ENCODE measurements at regions of chr15 and their contacts with region 1.

Region 1: GRCh38 chr15:84981054-84981710 is 474 bp upstream of the PDE8A start:
- DNase-seq: peak; percentile 94 to 98 (median 97)
- ATAC-seq: peak; percentile 85
- H3K4me3 ChIP-seq: peak overlapping the region; percentile 98
- H3K4me3 Mint-ChIP-seq: peak overlapping the region; percentile 88 to 97 (median 95)
- H3K27ac ChIP-seq: peak overlapping the region; percentile 89
- H3K27ac Mint-ChIP-seq: peak overlapping the region; percentile 85 to 98 (median 94)
- H3K4me1 ChIP-seq: peaks cover 8 to 13% of the 10 kb centered on the region in 2 donors
- H3K4me1 Mint-ChIP-seq: peaks cover 26 to 53% (median 44%) of the 10 kb centered on the region in 7 donors
- H3K27me3 ChIP-seq: no peaks in the 10 kb centered on the region
- H3K27me3 Mint-ChIP-seq: peaks cover 0 to 26% (median 0%) of the 10 kb centered on the region in 5 donors

Region 2: GRCh38 chr15:84588053-84588874 is 392.9 kb before region 1 on chr15:
- CTCF ChIA-PET with region 1: no interaction called
- POLR2A ChIA-PET with region 1: no interaction called
- intact Hi-C with region 1: loop called in 1 of 2 experiments (anchors 5 kb)
- DNase-seq: peak; percentile 68 to 84 (median 79)
- ATAC-seq: peak; percentile 100
- H3K4me3 ChIP-seq: no peak overlapping the region
- H3K4me3 Mint-ChIP-seq: peak overlapping the region in 8 of 10 donors; percentile 30 to 75 (median 63)
- H3K27ac ChIP-seq: no peak overlapping the region
- H3K27ac Mint-ChIP-seq: no peak overlapping the region
- H3K4me1 ChIP-seq: no peaks in the 10 kb centered on the region
- H3K4me1 Mint-ChIP-seq: peaks cover 0 to 6% (median 5%) of the 10 kb centered on the region in 7 donors
- H3K27me3 ChIP-seq: no peaks in the 10 kb centered on the region
- H3K27me3 Mint-ChIP-seq: peaks cover 0 to 34% (median 9%) of the 10 kb centered on the region in 5 donors

Region 3: GRCh38 chr15:84633311-84634227 is 347.6 kb before region 1 on chr15:
- CTCF ChIA-PET with region 1: no interaction called
- POLR2A ChIA-PET with region 1: interaction called, 11 read pairs
- intact Hi-C with region 1: loop called (anchors 1 to 2 kb)
- DNase-seq: peak; percentile 48 to 77 (median 66)
- ATAC-seq: peak; percentile 67
- H3K4me3 ChIP-seq: peak overlapping the region; percentile 96
- H3K4me3 Mint-ChIP-seq: peak overlapping the region; percentile 84 to 99 (median 98)
- H3K27ac ChIP-seq: peak overlapping the region; percentile 78
- H3K27ac Mint-ChIP-seq: peak overlapping the region; percentile 79 to 98 (median 93)
- H3K4me1 ChIP-seq: peaks cover 26 to 40% of the 10 kb centered on the region in 2 donors
- H3K4me1 Mint-ChIP-seq: peaks cover 23 to 58% (median 53%) of the 10 kb centered on the region in 7 donors
- H3K27me3 ChIP-seq: no peaks in the 10 kb centered on the region
- H3K27me3 Mint-ChIP-seq: no peaks in the 10 kb centered on the region

Region 4: DNA sequence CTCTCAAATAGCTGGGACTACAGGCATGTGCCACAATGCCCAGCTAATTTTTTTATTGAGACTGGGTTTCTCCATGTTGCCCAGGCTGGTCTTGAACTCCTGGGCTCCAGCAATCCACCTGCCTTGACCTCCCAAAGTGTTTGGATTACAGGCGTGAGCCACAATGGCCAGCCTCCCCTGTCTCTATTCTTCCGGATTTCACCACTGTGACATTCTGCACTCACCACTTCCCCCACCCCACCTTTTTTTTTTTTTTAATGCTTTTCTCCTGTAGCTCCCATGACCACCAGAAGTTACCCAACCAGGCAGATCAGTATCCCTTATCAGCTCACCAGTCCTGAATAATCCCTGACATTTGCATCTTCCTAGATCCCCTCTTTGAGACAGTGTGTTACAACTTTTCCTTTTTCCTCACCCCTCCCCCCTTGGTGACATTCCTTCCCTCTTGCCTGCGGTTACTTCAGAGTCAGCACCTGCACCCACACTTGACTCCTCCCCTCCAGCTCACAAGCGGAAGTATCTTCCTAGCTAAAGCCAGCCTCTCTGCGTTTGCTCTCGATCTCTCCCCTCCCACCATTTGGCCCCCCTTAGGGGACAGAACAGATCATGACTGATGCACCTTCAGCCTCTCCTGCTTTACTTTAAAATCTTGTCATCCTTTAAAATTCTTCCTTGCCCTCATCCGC is 246.2 kb before region 1 on chr15:
- CTCF ChIA-PET with region 1: no interaction called
- POLR2A ChIA-PET with region 1: no interaction called
- intact Hi-C with region 1: loop called in 1 of 2 experiments (anchors 1 kb)
- DNase-seq: peak in 8 of 9 donors; percentile 69 to 83 (median 78)
- ATAC-seq: peak; percentile 85
- H3K4me3 ChIP-seq: peak overlapping the region; percentile 56
- H3K4me3 Mint-ChIP-seq: peak overlapping the region; percentile 71 to 89 (median 84)
- H3K27ac ChIP-seq: peak overlapping the region; percentile 67
- H3K27ac Mint-ChIP-seq: peak overlapping the region; percentile 89 to 96 (median 93)
- H3K4me1 ChIP-seq: peaks cover 34 to 47% of the 10 kb centered on the region in 2 donors
- H3K4me1 Mint-ChIP-seq: peaks cover 36 to 62% (median 50%) of the 10 kb centered on the region in 7 donors
- H3K27me3 ChIP-seq: no peaks in the 10 kb centered on the region
- H3K27me3 Mint-ChIP-seq: no peaks in the 10 kb centered on the region

Region 5: DNA sequence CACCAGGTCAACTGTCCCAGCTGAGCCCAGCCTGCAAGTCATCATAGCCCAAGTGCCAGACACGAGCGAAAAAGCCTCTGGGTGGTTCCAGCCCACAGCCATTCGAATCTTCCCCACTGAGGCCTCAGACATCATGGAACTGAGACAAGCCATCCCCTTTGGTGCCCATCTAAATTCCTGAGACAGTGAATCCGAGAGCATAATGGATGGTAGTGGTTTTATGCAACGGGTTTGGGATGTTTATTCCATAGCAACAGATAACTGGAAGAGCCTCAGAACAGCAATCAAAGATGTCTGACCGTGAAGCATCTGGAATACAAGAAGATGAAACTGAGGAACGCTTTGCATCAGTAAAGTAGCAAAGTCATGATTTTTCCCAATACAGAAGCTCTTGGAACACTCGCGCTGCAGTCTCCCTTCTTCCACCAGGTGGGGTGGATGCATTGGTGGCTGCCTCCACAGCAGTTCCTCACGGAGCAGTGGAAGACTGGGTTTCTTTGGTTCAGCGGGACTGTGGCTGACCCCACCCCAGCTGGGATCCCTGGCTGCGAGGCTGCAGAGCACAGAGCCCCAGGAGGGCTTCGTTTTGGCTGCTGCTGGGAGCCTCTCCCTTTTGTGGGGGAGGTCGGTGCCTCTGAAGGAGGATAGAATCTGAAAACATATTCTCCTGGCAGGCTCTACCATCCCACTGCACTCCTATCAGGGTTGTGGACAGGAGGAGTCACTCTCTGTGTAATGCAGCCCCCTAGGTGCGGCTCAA is 25.9 kb before region 1 on chr15:
- CTCF ChIA-PET with region 1: interaction called, 7 read pairs
- POLR2A ChIA-PET with region 1: no interaction called
- intact Hi-C with region 1: loop called in 1 of 2 experiments (anchors 2 kb)
- DNase-seq: peak in 7 of 9 donors; percentile 11 to 40 (median 34)
- ATAC-seq: peak; percentile 74
- H3K4me3 ChIP-seq: no peak overlapping the region
- H3K4me3 Mint-ChIP-seq: peak overlapping the region in 3 of 10 donors; percentile 12 to 37 (median 33)
- H3K27ac ChIP-seq: no peak overlapping the region
- H3K27ac Mint-ChIP-seq: no peak overlapping the region
- H3K4me1 ChIP-seq: no peaks in the 10 kb centered on the region
- H3K4me1 Mint-ChIP-seq: peaks cover 4 to 12% (median 11%) of the 10 kb centered on the region in 7 donors
- H3K27me3 ChIP-seq: no peaks in the 10 kb centered on the region
- H3K27me3 Mint-ChIP-seq: peaks cover 5 to 39% (median 8%) of the 10 kb centered on the region in 5 donors

Region 6: GRCh38 chr15:85030301-85031049 is 49.3 kb after region 1 on chr15:
- CTCF ChIA-PET with region 1: interaction called, 8 read pairs
- POLR2A ChIA-PET with region 1: interaction called, 13 read pairs
- intact Hi-C with region 1: loop called in 1 of 2 experiments (anchors 2 kb)
- DNase-seq: no peak
- ATAC-seq: peak; percentile 37
- H3K4me3 ChIP-seq: no peak overlapping the region
- H3K4me3 Mint-ChIP-seq: peak overlapping the region in 8 of 10 donors; percentile 3 to 44 (median 32)
- H3K27ac ChIP-seq: no peak overlapping the region
- H3K27ac Mint-ChIP-seq: peak overlapping the region in 7 of 9 donors; percentile 0 to 79 (median 49)
- H3K4me1 ChIP-seq: peaks cover 15 to 25% of the 10 kb centered on the region in 2 donors
- H3K4me1 Mint-ChIP-seq: peaks cover 44 to 70% (median 61%) of the 10 kb centered on the region in 7 donors
- H3K27me3 ChIP-seq: no peaks in the 10 kb centered on the region
- H3K27me3 Mint-ChIP-seq: no peaks in the 10 kb centered on the region

Region 7: GRCh38 chr15:85276508-85276907 is 295.3 kb after region 1 on chr15:
- CTCF ChIA-PET with region 1: no interaction called
- POLR2A ChIA-PET with region 1: no interaction called
- intact Hi-C with region 1: no loop called
- DNase-seq: no peak
- ATAC-seq: no peak
- H3K4me3 ChIP-seq: no peak overlapping the region
- H3K4me3 Mint-ChIP-seq: no peak overlapping the region
- H3K27ac ChIP-seq: no peak overlapping the region
- H3K27ac Mint-ChIP-seq: no peak overlapping the region
- H3K4me1 ChIP-seq: no peaks in the 10 kb centered on the region
- H3K4me1 Mint-ChIP-seq: peaks cover 0 to 12% (median 0%) of the 10 kb centered on the region in 7 donors
- H3K27me3 ChIP-seq: no peaks in the 10 kb centered on the region
- H3K27me3 Mint-ChIP-seq: no peaks in the 10 kb centered on the region

Region 8: DNA sequence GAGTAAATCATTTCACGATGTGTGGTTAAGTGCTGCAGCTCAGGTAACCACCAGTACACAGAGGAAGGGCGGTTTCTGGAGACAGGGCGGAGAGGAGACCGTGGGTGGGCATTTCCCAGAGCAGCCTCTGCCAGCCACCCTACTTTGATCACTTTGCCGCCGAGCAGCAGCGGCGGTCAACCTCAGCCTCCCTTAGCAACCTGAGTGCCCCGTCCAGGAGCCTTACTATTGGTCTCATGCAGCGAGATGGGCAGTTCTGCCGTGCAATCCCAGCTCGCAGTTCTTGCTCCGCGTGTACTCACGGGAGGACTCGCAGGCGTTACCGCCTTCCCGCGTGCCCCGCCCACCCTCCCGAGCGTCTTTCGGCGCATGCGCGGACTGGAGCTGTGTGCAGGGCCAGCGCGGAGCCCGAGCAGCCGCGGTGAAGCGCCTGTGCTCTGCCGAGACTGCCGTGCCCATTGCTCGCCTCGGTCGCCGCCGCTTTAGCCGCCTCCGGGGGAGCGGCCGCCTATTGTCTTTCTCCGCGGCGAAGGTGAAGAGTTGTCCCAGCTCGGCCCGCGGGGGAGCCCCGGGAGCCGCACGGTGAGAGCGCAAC is 399.1 kb after region 1 on chr15 and contains the start of gene AKAP13:
- CTCF ChIA-PET with region 1: no interaction called
- POLR2A ChIA-PET with region 1: interaction called, 3 read pairs
- intact Hi-C with region 1: loop called in 1 of 2 experiments (anchors 1 kb)
- DNase-seq: peak; percentile 78 to 93 (median 88)
- ATAC-seq: peak; percentile 87
- H3K4me3 ChIP-seq: peak within 1 kb of the TSS; percentile 62
- H3K4me3 Mint-ChIP-seq: peak within 1 kb of the TSS; percentile 86 to 96 (median 92)
- H3K27ac ChIP-seq: peak within 1 kb of the TSS; percentile 79
- H3K27ac Mint-ChIP-seq: peak within 1 kb of the TSS; percentile 84 to 96 (median 94)
- H3K4me1 ChIP-seq: peaks cover 16 to 23% of the 10 kb centered on the region in 2 donors
- H3K4me1 Mint-ChIP-seq: peaks cover 29 to 65% (median 47%) of the 10 kb centered on the region in 7 donors
- H3K27me3 ChIP-seq: no peaks in the 10 kb centered on the region
- H3K27me3 Mint-ChIP-seq: peaks cover 0 to 2% (median 0%) of the 10 kb centered on the region in 5 donors
- total RNA-seq, gene AKAP13: 170 to 400 (median 241) TPM

Measured in naive thymus-derived CD4-positive, alpha-beta T cell (primary cell).